CD8-positive, alpha-beta T cell (primary cell): ENCODE measurements at regions of chr19 and their contacts with region 1.

Region 1: DNA sequence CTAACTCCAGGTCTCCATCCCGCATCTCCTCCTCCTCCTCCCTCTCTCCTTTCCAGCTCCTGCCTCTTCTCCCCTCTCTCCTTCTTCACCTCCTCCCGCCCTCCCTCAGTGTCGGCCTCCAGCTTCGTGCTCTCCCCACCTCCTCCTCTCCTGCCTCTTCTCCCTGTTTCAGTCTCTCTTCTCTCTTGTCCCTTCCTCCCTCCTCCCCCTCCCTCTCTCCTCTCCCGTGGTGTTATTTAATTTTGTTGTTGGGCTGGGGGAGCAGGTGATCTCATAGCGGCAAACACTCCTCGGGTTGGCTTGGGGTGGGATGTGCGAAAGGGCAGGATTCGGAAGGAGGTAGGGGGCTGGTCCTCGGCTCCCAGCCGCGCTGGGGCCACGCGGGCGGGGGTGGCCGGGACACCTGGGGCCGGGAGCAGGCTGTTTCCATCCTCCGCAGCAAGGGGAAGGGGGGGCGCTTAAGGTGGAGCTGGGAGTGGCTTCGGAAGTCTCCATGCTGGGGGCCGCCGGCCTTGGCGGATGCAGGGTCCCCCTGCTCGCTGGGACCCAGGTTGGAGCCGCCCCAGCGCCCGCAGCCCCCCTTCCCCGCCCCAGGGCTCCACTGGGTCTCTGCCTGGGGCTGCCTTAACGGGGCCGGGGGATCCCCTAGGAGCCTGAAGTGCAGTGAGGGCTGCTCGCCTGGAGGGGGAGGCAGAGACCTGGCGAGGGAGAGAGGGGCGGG is at the start of gene CA11:
- DNase-seq: peak; percentile 87 to 97 (median 92)
- ATAC-seq: peak; percentile 84
- H3K4me3 ChIP-seq: peak within 1 kb of the TSS; percentile 58 to 98
- H3K4me3 Mint-ChIP-seq: peak within 1 kb of the TSS; percentile 93
- H3K27ac ChIP-seq: peak within 1 kb of the TSS; percentile 80 to 88
- H3K27ac Mint-ChIP-seq: peak within 1 kb of the TSS; percentile 99
- H3K4me1 ChIP-seq: peaks cover 32% of the 10 kb centered on the region
- H3K4me1 Mint-ChIP-seq: peaks cover 47% of the 10 kb centered on the region
- H3K27me3 ChIP-seq: no peaks in the 10 kb centered on the region
- H3K27me3 Mint-ChIP-seq: no peaks in the 10 kb centered on the region
- CTCF ChIP-seq: peak; percentile 77
- total RNA-seq, gene CA11: 10.3 to 11.2 TPM

Region 2: GRCh38 chr19:48660854-48661731 is 14.9 kb after region 1 on chr19:
- CTCF ChIA-PET with region 1: interaction called, 8 read pairs
- POLR2A ChIA-PET with region 1: no interaction called
- intact Hi-C with region 1: loop called (anchors 1 kb)
- DNase-seq: peak; percentile 53 to 92 (median 79)
- ATAC-seq: peak; percentile 90
- H3K4me3 ChIP-seq: peak overlapping the region; percentile 31 to 36
- H3K4me3 Mint-ChIP-seq: peak overlapping the region; percentile 70
- H3K27ac ChIP-seq: peak overlapping the region; percentile 56 to 68
- H3K27ac Mint-ChIP-seq: peak overlapping the region; percentile 90
- H3K4me1 ChIP-seq: peaks cover 11% of the 10 kb centered on the region
- H3K4me1 Mint-ChIP-seq: peaks cover 9% of the 10 kb centered on the region
- H3K27me3 ChIP-seq: no peaks in the 10 kb centered on the region
- H3K27me3 Mint-ChIP-seq: no peaks in the 10 kb centered on the region
- CTCF ChIP-seq: no peak

Region 3: DNA sequence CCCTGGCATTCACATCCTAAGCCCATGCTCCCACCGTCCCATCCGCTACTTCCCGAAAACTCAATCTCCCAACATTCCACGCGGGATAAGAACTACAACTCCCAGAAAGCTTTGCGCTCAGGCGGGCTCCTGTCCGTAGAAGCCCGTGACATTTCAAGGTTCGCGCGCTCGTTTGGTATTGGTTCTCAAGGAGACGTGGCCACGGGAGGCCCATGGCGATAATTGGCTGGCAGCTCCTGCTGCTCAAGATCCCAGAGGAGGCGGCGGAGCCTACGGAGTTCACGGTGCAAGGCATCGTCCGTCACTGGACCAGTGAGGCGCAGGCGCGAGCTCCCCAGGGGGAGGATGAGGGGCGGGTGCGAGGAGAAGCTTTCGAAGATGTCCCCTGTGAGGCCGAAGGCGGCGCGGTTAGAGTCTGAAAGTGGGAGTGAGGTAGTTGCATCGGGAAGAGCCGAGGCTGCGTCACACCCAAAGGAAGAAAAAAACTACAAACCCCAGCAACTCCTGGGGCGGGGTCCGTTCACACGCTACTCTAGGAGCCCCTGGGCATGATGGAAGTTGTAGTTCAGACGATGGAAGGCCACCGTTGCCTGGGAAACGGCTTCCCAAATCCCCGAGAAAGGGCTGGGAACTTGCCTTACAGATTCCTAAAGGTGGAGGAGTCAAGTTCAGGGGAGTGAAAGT is 74.6 kb after region 1 on chr19:
- CTCF ChIA-PET with region 1: interaction called, 3 read pairs
- POLR2A ChIA-PET with region 1: no interaction called
- intact Hi-C with region 1: loop called (anchors 1 to 2 kb)
- DNase-seq: peak; percentile 81 to 96 (median 90)
- ATAC-seq: peak; percentile 80
- H3K4me3 ChIP-seq: peak overlapping the region; percentile 65 to 69
- H3K4me3 Mint-ChIP-seq: peak overlapping the region; percentile 96
- H3K27ac ChIP-seq: peak overlapping the region; percentile 52 to 88
- H3K27ac Mint-ChIP-seq: peak overlapping the region; percentile 96
- H3K4me1 ChIP-seq: peaks cover 16% of the 10 kb centered on the region
- H3K4me1 Mint-ChIP-seq: peaks cover 24% of the 10 kb centered on the region
- H3K27me3 ChIP-seq: no peaks in the 10 kb centered on the region
- H3K27me3 Mint-ChIP-seq: no peaks in the 10 kb centered on the region
- CTCF ChIP-seq: no peak

Region 4: DNA sequence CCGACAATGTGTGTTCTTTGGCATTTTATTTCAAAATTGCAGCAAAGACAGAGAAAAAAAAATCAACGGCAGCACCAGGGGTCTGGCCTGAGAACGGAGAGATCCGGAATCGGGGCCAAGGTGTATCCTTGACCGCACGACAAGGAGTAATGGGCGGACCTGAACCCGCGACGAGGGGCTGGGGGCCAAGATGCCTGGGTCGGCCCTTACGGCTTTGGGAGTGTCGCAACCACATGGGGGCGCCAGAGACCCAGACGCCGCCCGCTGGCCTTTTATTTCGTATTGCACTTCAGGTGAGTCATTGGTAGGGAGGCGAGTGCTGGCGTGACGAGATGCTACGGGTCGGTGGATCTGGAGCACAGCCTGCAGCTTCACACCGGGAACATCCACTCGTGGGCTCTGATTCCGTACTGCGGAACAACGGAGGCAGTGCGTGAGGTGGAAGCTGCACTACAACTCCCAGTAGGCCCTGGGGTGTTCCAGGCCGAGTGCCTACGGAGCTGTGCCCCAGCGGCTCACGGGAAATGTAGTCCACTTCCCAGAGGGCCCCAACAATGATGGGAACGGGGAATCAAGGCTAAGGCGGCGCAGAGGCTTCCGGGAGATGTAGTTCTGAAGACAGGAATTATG is 149.0 kb after region 1 on chr19:
- CTCF ChIA-PET with region 1: interaction called, 6 read pairs
- POLR2A ChIA-PET with region 1: no interaction called
- intact Hi-C with region 1: loop called in 1 of 2 experiments (anchors 5 kb)
- DNase-seq: peak; percentile 61 to 93 (median 83)
- ATAC-seq: peak; percentile 98
- H3K4me3 ChIP-seq: peak overlapping the region; percentile 71 to 78
- H3K4me3 Mint-ChIP-seq: peak overlapping the region; percentile 91
- H3K27ac ChIP-seq: peak overlapping the region; percentile 18 to 73
- H3K27ac Mint-ChIP-seq: peak overlapping the region; percentile 85
- H3K4me1 ChIP-seq: peaks cover 3% of the 10 kb centered on the region
- H3K4me1 Mint-ChIP-seq: peaks cover 6% of the 10 kb centered on the region
- H3K27me3 ChIP-seq: no peaks in the 10 kb centered on the region
- H3K27me3 Mint-ChIP-seq: no peaks in the 10 kb centered on the region
- CTCF ChIP-seq: peak; percentile 98

Region 5: DNA sequence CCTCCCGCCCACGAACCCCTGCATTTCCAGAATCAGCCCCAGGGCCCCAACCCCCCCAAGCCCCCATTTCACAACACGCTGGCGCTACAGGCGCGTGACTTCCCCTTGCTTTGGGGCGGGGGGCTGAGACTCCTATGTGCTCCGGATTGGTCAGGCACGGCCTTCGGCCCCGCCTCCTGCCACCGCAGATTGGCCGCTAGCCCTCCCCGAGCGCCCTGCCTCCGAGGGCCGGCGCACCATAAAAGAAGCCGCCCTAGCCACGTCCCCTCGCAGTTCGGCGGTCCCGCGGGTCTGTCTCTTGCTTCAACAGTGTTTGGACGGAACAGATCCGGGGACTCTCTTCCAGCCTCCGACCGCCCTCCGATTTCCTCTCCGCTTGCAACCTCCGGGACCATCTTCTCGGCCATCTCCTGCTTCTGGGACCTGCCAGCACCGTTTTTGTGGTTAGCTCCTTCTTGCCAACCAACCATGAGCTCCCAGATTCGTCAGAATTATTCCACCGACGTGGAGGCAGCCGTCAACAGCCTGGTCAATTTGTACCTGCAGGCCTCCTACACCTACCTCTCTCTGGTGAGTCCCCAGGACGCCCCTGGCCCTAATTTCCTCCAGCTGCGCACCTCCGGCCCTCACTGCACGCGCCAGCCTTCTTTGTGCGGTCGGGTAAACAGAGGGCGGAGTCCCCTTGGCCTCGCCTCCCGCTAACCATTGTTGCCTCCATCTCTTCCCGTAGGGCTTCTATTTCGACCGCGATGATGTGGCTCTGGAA is 319.1 kb after region 1 on chr19 and contains the start of gene FTL:
- CTCF ChIA-PET with region 1: no interaction called
- POLR2A ChIA-PET with region 1: interaction called, 3 read pairs
- intact Hi-C with region 1: loop called (anchors 2 to 10 kb)
- DNase-seq: peak; percentile 71 to 96 (median 88)
- ATAC-seq: peak; percentile 73
- H3K4me3 ChIP-seq: peak within 1 kb of the TSS; percentile 83 to 98
- H3K4me3 Mint-ChIP-seq: peak within 1 kb of the TSS; percentile 99
- H3K27ac ChIP-seq: peak within 1 kb of the TSS; percentile 84 to 90
- H3K27ac Mint-ChIP-seq: peak within 1 kb of the TSS; percentile 99
- H3K4me1 ChIP-seq: peaks cover 49% of the 10 kb centered on the region
- H3K4me1 Mint-ChIP-seq: peaks cover 60% of the 10 kb centered on the region
- H3K27me3 ChIP-seq: no peaks in the 10 kb centered on the region
- H3K27me3 Mint-ChIP-seq: no peaks in the 10 kb centered on the region
- CTCF ChIP-seq: no peak
- total RNA-seq, gene FTL: 665 to 668 TPM